ENCODE measurements at regions of chr3 and their contacts with region 1.

Region 1: GRCh38 chr3:52245322-52246263 is at the start of gene PPM1M:
- DNase-seq: peak; percentile 77 to 90 (median 85)
- H3K4me3 ChIP-seq: peak within 1 kb of the TSS; percentile 19 to 74 (median 49)
- H3K27ac ChIP-seq: peak within 1 kb of the TSS in 1 of 2 experiments; percentile 9
- H3K4me1 ChIP-seq: peaks cover 0 to 43% (median 35%) of the 10 kb centered on the region in 4 experiments
- H3K27me3 ChIP-seq: no peaks in the 10 kb centered on the region

Region 2: DNA sequence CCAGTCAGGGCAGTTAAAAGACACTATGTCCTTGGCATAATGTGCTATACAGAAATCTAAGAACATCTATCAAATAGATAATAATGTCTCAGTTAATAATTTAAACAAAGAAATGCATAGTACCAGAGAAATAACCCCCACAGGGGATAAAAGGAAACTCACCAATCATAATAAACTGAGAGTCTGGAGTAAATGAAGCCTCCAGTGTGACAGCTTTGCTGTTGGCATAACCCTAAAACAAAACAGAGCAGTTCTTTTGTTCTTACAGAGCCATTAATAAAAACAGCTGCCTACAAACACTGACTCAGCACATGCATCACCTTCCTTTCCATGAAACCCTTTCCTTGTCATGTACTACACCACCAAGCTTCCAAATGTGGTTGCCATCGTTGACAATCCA is 13.4 kb after region 1 on chr3:
- CTCF ChIA-PET with region 1: interaction called, 161 read pairs
- POLR2A ChIA-PET with region 1: interaction called, 3 read pairs
- DNase-seq: no peak
- H3K4me3 ChIP-seq: no peak overlapping the region
- H3K27ac ChIP-seq: peak overlapping the region in 1 of 2 experiments; percentile 29
- H3K4me1 ChIP-seq: peaks cover 0 to 25% (median 5%) of the 10 kb centered on the region in 4 experiments
- H3K27me3 ChIP-seq: no peaks in the 10 kb centered on the region

Region 3: GRCh38 chr3:52270252-52270754 is 24.7 kb after region 1 on chr3:
- CTCF ChIA-PET with region 1: interaction called, 12 read pairs
- POLR2A ChIA-PET with region 1: no interaction called
- DNase-seq: peak in 2 of 3 donors; percentile 41 to 48
- H3K4me3 ChIP-seq: peak overlapping the region in 2 of 7 experiments; percentile 41 to 50
- H3K27ac ChIP-seq: peak overlapping the region; percentile 40 to 59
- H3K4me1 ChIP-seq: peaks cover 9 to 29% (median 17%) of the 10 kb centered on the region in 4 experiments
- H3K27me3 ChIP-seq: no peaks in the 10 kb centered on the region